ENCODE measurements at regions of chr1 and their contacts with region 1.

Region 1: GRCh38 chr1:15820478-15820877 is 13.0 kb upstream of the UQCRHL start:
- DNase-seq: no peak
- ATAC-seq: no peak
- H3K4me3 Mint-ChIP-seq: no peak overlapping the region
- H3K27ac Mint-ChIP-seq: no peak overlapping the region
- H3K4me1 Mint-ChIP-seq: peaks cover 6% of the 10 kb centered on the region
- H3K27me3 Mint-ChIP-seq: no peaks in the 10 kb centered on the region
- CTCF ChIP-seq: no peak

Region 2: GRCh38 chr1:14704846-14705245 is 1115.6 kb before region 1 on chr1:
- CTCF ChIA-PET with region 1: no interaction called
- POLR2A ChIA-PET with region 1: no interaction called
- intact Hi-C with region 1: no loop called
- DNase-seq: no peak
- ATAC-seq: no peak
- H3K4me3 Mint-ChIP-seq: no peak overlapping the region
- H3K27ac Mint-ChIP-seq: no peak overlapping the region
- H3K4me1 Mint-ChIP-seq: no peaks in the 10 kb centered on the region
- H3K27me3 Mint-ChIP-seq: no peaks in the 10 kb centered on the region
- CTCF ChIP-seq: no peak

Region 3: DNA sequence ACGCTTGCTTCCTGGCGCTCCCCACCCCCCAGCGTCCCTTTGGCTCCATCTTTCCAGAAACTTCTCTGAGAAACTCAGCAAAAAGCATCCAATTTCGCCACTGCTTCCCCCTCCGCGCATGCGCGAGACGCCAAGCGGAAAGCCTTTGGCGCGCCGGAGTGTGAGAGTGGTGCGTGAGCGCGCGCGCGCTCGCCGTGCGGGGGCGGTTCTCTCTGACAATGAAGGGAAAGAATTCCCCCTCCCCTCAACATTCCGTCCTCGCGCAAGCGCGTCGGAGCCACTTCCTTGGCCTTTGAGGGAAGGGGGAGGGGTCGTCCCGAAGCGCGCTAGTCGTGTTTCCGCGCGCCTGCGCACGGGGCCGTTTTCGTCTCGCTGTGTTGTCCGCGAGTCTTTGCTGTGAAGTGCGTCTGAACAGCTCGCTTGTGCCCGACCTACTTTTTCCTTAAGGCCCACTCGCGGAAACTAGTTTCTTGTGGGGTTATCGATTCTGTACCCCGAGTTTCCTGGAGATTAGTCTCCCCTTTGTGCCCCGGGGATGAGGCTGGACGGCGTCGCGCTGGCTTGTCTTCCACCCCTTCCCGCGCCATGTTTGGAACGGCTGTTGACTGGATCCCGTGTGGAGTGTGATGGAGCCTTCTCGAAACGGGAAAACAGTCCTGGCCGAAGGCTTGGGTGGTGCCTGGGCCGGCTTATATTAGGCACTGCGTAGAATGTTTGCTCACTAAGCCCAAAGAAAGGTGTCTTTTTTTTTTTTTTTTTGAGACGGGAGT is 15.4 kb after region 1 on chr1:
- CTCF ChIA-PET with region 1: interaction called, 5 read pairs
- POLR2A ChIA-PET with region 1: interaction called, 65 read pairs
- intact Hi-C with region 1: loop called (anchors 2 kb)
- DNase-seq: peak; percentile 96
- ATAC-seq: peak; percentile 49
- H3K4me3 Mint-ChIP-seq: peak overlapping the region; percentile 90
- H3K27ac Mint-ChIP-seq: peak overlapping the region; percentile 98
- H3K4me1 Mint-ChIP-seq: peaks cover 45% of the 10 kb centered on the region
- H3K27me3 Mint-ChIP-seq: no peaks in the 10 kb centered on the region
- CTCF ChIP-seq: no peak

Region 4: DNA sequence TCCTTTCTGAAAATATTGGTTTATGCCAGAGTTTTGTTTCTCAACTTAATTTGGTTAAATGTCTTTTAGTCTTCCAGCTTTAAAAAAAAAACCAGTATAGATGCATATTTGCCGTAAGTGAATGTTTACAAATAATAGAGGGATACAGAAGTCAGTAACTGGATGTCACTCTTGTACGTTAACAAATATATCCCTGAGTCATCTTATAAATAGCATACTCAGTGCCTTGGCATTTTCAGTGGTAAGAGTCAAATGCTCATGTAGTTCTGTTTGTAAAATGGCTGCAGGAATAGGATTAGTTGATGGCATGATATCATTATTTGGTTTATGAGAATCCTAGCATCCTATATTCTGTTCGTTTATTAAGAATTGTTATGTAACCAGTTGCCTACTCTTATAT is 82.4 kb after region 1 on chr1:
- CTCF ChIA-PET with region 1: interaction called, 9 read pairs
- POLR2A ChIA-PET with region 1: interaction called, 3 read pairs
- intact Hi-C with region 1: loop called (anchors 1 kb)
- DNase-seq: no peak
- ATAC-seq: no peak
- H3K4me3 Mint-ChIP-seq: no peak overlapping the region
- H3K27ac Mint-ChIP-seq: no peak overlapping the region
- H3K4me1 Mint-ChIP-seq: peaks cover 26% of the 10 kb centered on the region
- H3K27me3 Mint-ChIP-seq: no peaks in the 10 kb centered on the region
- CTCF ChIP-seq: no peak

Region 5: DNA sequence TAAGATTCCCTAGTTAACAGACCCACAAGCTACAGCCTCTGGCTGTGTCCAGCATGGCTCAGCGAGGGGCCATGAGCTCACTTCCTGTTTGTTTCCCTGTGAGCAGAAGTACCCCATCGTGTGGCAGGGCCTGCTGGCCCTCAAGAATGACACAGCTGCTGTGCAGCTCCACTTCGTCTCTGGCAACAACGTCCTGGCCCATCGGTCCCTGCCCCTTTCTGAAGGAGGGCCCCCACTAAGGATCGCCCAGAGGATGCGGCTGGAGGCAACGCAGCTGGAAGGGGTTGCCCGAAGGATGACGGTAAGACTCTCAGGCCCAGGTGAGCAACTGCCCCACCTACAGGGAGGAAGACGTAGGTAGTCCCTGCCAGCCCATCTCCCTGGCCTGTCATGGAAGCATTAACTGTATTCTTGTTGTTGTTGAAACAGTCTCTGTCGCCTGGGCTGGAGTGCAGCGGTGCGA is 117.3 kb after region 1 on chr1:
- CTCF ChIA-PET with region 1: interaction called, 15 read pairs
- POLR2A ChIA-PET with region 1: no interaction called
- intact Hi-C with region 1: no loop called
- DNase-seq: no peak
- ATAC-seq: no peak
- H3K4me3 Mint-ChIP-seq: no peak overlapping the region
- H3K27ac Mint-ChIP-seq: peak overlapping the region; percentile 86
- H3K4me1 Mint-ChIP-seq: peaks cover 7% of the 10 kb centered on the region
- H3K27me3 Mint-ChIP-seq: no peaks in the 10 kb centered on the region
- CTCF ChIP-seq: no peak

Region 6: GRCh38 chr1:15994590-15995351 is 174.3 kb after region 1 on chr1:
- CTCF ChIA-PET with region 1: interaction called, 18 read pairs
- POLR2A ChIA-PET with region 1: interaction called, 3 read pairs
- intact Hi-C with region 1: loop called (anchors 1 kb)
- DNase-seq: no peak
- ATAC-seq: peak; percentile 94
- H3K4me3 Mint-ChIP-seq: no peak overlapping the region
- H3K27ac Mint-ChIP-seq: no peak overlapping the region
- H3K4me1 Mint-ChIP-seq: no peaks in the 10 kb centered on the region
- H3K27me3 Mint-ChIP-seq: no peaks in the 10 kb centered on the region
- CTCF ChIP-seq: no peak

Region 7: GRCh38 chr1:16055613-16056520 is 235.4 kb after region 1 on chr1:
- CTCF ChIA-PET with region 1: interaction called, 6 read pairs
- POLR2A ChIA-PET with region 1: no interaction called
- intact Hi-C with region 1: loop called (anchors 1 kb)
- DNase-seq: peak; percentile 77
- ATAC-seq: peak; percentile 100
- H3K4me3 Mint-ChIP-seq: no peak overlapping the region
- H3K27ac Mint-ChIP-seq: no peak overlapping the region
- H3K4me1 Mint-ChIP-seq: peaks cover 6% of the 10 kb centered on the region
- H3K27me3 Mint-ChIP-seq: peaks cover 6% of the 10 kb centered on the region
- CTCF ChIP-seq: no peak